ENCODE measurements at regions of chr19 and their contacts with region 1.

Region 1: GRCh38 chr19:5031231-5032100 is 62.6 kb downstream of the KDM4B start:
- DNase-seq: peak; percentile 79 to 94 (median 93)
- ATAC-seq: peak; percentile 81 to 83
- H3K4me3 ChIP-seq: no peak overlapping the region
- H3K27ac ChIP-seq: no peak overlapping the region
- H3K4me1 ChIP-seq: peaks cover 2% of the 10 kb centered on the region
- H3K27me3 ChIP-seq: no peaks in the 10 kb centered on the region

Region 2: DNA sequence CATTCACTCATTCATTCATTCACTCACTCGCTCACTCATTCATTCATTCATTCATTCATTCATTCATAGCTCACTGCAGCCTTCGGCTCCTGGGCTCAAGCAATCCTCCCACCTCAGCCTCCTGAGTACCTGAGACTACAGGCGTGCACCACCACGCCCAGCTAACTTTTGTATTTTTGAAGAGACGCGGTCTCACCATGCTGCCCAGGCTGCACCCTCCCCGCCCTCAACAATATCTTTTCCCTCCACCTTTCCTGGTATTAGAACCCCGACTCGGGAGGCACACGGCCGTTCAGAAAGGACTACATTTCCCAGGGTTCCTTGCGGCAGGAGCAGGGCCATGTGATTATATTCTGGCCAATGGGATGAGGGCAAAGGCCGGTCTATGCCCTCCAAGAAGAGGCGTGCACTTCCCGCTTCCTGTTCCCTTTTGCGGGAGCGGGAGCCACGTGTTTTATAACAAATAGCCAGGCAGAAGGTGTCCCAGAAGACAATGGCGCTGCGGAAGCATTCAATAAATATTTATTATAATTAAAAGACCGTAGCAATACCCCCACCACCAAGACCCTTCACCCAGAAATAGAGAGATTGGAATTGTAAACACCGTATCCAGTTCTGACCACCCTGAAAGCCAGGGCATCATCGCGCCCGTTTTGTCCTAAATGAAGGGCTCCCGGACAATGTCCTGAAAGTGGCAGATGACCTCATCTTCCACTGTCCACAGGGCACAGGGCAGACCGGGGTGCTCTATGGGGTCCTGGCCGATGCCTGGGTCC is 215.9 kb before region 1 on chr19:
- intact Hi-C with region 1: loop called in 3 of 4 experiments (anchors 5 kb)
- DNase-seq: peak; percentile 92 to 94 (median 92)
- ATAC-seq: peak; percentile 93 to 95
- H3K4me3 ChIP-seq: no peak overlapping the region
- H3K27ac ChIP-seq: no peak overlapping the region
- H3K4me1 ChIP-seq: no peaks in the 10 kb centered on the region
- H3K27me3 ChIP-seq: no peaks in the 10 kb centered on the region

Region 3: DNA sequence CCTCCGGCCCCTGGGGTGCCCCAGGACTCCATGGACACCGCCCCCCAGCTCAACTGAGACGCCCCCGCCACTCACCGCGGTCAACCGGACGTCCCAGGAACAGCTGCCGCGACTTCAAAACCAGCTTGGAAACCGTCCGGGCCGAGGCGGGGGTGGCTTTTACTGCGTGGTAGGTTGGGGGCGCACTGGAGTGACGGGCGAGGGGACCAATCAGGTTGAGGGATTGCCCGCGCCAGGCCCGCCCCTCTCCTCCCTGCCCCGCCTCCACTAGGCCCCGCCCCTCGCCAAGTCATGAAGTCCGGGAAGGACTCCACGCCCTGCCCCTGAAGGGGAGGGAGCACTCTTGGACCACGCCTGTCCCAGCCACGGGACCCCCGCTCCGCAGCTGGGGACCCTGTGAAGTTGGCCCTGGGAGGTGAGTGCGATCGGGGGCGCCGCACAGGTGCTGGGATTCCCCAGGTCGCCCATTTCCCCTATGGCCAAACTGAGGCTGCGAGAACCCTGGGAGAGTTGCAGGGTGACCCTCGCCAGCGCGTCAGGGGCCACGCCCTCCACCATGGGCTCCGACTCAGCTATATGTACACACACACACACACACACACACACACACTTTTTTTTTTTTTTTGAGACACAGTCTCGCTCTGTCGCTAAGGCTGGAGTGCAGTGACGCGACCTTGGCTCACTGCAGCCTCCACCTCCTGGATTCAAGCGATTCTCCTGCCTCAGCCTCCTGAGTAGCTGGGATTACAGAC is 163.8 kb before region 1 on chr19 and contains the start of gene PLIN3:
- intact Hi-C with region 1: loop called (anchors 2 to 5 kb)
- DNase-seq: peak; percentile 98 to 99 (median 99)
- ATAC-seq: peak; percentile 98
- H3K4me3 ChIP-seq: peak within 1 kb of the TSS; percentile 79
- H3K27ac ChIP-seq: peak within 1 kb of the TSS; percentile 27
- H3K4me1 ChIP-seq: peaks cover 4% of the 10 kb centered on the region
- H3K27me3 ChIP-seq: no peaks in the 10 kb centered on the region
- total RNA-seq, gene PLIN3: 26.5 to 32.2 (median 28.5) TPM

Region 4: DNA sequence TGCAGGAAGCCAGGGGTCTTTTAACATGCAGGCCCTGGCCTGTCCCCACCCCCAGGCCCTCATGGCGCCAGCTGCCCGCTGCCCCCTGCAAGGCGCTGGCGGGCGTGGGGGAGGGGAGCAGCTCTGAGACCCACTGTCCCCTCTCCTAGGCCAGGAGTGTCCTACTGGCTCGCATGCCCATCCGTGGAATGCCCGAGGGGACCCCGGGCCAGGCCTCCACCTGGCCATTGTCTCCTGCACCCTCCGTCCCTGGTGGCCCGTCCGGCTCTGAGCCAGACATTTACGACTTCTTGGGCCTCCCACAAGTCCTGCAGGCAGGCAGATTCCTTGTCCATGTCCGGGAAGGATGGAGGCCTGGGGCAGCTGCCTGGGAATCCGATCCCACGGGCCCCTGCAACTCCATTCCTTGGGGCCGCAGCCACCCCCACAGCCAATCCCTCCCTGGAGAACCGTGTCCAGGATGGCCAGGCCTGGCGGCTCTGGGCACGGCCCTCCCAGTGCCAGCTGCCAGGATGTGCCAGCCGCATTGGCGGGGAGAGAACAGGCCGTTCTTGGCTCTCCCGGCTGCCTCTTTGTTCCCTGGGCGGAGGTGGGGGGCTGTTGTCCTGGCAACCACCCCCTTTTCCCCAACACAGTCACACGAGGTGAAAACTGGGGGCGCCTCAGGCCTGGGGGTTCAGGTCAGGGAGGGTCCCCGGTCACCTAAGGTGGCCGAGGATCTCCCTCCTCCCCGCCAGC is 153.5 kb before region 1 on chr19:
- intact Hi-C with region 1: loop called in 3 of 4 experiments (anchors 2 to 5 kb)
- DNase-seq: peak; percentile 31 to 72 (median 62)
- ATAC-seq: peak; percentile 76 to 87
- H3K4me3 ChIP-seq: no peak overlapping the region
- H3K27ac ChIP-seq: peak overlapping the region; percentile 30
- H3K4me1 ChIP-seq: no peaks in the 10 kb centered on the region
- H3K27me3 ChIP-seq: no peaks in the 10 kb centered on the region

Region 5: GRCh38 chr19:4957981-4958380 is 73.5 kb before region 1 on chr19:
- intact Hi-C with region 1: no loop called
- DNase-seq: peak in 2 of 3 donors; percentile 19 to 24
- ATAC-seq: no peak
- H3K4me3 ChIP-seq: no peak overlapping the region
- H3K27ac ChIP-seq: no peak overlapping the region
- H3K4me1 ChIP-seq: no peaks in the 10 kb centered on the region
- H3K27me3 ChIP-seq: no peaks in the 10 kb centered on the region

Region 6: DNA sequence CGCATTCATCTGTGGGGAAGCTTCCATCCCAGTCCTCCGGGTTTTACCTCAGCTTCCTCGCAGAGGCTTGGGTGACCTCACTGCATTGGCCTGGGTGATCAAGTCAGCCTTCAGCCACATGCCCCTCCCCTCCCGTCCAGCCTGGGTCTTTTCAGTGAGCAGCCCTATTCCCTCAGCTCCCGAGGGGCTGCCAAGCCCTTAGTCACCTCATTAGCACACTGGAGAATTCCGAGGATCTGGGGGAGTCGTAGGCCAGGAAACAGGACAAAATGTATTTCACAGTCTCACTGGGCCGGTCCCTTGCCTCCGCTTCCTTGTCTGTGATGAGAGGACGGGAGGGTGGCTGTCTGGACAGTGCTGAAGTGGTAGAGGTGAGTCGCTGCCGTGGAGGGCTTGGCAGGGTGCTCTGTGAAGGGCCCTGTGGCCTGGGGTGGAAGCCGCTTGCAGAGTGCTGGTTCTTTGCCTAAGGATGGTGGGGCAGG is 42.7 kb before region 1 on chr19:
- intact Hi-C with region 1: loop called in 1 of 4 experiments (anchors 5 kb)
- DNase-seq: peak; percentile 77 to 85 (median 78)
- ATAC-seq: peak; percentile 61 to 81
- H3K4me3 ChIP-seq: no peak overlapping the region
- H3K27ac ChIP-seq: peak overlapping the region; percentile 11
- H3K4me1 ChIP-seq: peaks cover 21% of the 10 kb centered on the region
- H3K27me3 ChIP-seq: no peaks in the 10 kb centered on the region

Measured in right cardiac atrium (tissue), 5 donors.